ENCODE measurements at regions of chr11 and their contacts with region 1.

Region 1: DNA sequence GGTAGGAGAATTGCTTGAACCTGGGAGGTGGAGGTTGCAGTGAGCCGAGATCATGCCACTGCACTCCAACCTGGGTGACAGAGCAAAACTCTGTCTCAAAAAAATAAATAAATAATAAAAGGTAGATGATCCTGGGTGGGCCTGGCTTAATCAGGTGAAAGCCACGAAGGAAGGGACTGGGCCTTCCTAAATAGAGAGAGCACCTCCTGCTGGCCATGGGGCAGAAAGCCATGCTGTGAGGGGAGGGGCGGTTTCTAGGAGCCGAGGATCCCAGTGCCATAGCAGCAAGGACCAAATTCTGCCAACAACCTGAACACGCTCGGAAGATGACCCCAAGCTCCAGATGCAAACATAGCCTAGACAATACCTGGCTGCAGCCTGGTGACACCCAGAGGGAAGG is 24.5 kb upstream of the DGKZ start:
- DNase-seq: peak; percentile 63
- ATAC-seq: peak; percentile 52
- H3K4me3 Mint-ChIP-seq: no peak overlapping the region
- H3K27ac Mint-ChIP-seq: no peak overlapping the region
- H3K4me1 Mint-ChIP-seq: peaks cover 18% of the 10 kb centered on the region
- H3K27me3 Mint-ChIP-seq: no peaks in the 10 kb centered on the region

Region 2: GRCh38 chr11:46308631-46309419 is 13.9 kb before region 1 on chr11:
- CTCF ChIA-PET with region 1: interaction called, 34 read pairs
- POLR2A ChIA-PET with region 1: no interaction called
- intact Hi-C with region 1: no loop called
- DNase-seq: peak; percentile 85
- ATAC-seq: peak; percentile 86
- H3K4me3 Mint-ChIP-seq: no peak overlapping the region
- H3K27ac Mint-ChIP-seq: no peak overlapping the region
- H3K4me1 Mint-ChIP-seq: peaks cover 5% of the 10 kb centered on the region
- H3K27me3 Mint-ChIP-seq: no peaks in the 10 kb centered on the region

Region 3: GRCh38 chr11:46332568-46333393 is 10.0 kb after region 1 on chr11:
- CTCF ChIA-PET with region 1: interaction called, 14 read pairs
- POLR2A ChIA-PET with region 1: interaction called, 3 read pairs
- intact Hi-C with region 1: no loop called
- DNase-seq: peak; percentile 75
- ATAC-seq: peak; percentile 18
- H3K4me3 Mint-ChIP-seq: peak overlapping the region; percentile 71
- H3K27ac Mint-ChIP-seq: peak overlapping the region; percentile 3
- H3K4me1 Mint-ChIP-seq: peaks cover 72% of the 10 kb centered on the region
- H3K27me3 Mint-ChIP-seq: no peaks in the 10 kb centered on the region

Region 4: GRCh38 chr11:47667135-47667534 is 1344.4 kb after region 1 on chr11:
- CTCF ChIA-PET with region 1: no interaction called
- POLR2A ChIA-PET with region 1: no interaction called
- intact Hi-C with region 1: no loop called
- DNase-seq: no peak
- ATAC-seq: no peak
- H3K4me3 Mint-ChIP-seq: no peak overlapping the region
- H3K27ac Mint-ChIP-seq: no peak overlapping the region
- H3K4me1 Mint-ChIP-seq: peaks cover 27% of the 10 kb centered on the region
- H3K27me3 Mint-ChIP-seq: no peaks in the 10 kb centered on the region

Measured in activated CD4-positive, alpha-beta T cell treated with anti-CD3 and anti-CD28 coated beads for 36 hours (primary cell).